PC-9 (cell line): ENCODE measurements at regions of chr9 and their contacts with region 1.

Region 1: DNA sequence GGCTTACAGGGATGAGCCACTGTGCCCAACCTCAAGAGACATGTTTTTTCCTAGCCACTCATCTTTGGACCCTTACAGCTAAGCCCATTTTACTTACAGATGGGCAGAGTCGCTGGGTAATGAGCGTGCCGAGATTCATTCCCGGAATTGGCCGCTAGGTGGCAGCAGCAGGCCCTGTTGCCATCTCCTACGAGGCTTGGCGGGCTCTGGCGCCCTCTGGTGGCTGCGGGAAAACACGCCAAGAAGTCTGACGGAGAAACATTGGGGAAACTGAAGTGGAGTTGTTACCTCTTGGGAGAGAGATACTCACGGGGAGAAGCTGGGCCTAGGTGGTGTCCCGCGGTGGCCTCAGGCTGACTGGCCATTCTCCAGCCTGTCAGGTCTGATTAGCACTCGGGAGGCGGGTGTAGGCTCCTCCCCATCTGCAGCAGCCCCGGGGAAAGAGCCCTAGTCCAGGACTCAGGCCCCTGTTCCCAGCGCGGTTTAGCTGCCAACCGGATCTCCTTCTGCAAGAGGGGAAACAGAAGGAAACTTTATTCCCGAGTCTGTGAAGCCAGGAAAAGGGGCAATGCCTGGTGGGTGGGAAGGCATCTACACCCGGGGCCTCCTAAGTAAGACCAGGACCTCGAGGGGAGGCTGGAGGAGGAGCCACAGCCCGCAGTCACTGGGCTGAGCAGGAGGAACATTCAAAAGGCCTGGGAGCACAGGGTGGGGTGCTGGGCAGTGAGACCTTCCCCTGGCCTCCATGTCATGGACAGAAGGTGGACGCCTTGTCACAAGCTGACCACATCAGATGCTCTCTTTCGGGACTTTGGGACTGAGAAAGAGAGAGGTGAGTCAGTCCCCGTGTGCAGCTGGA is 9.7 kb downstream of the PTGES2 start:
- DNase-seq: peak; percentile 75 to 93
- H3K4me3 ChIP-seq: no peak overlapping the region
- H3K27ac ChIP-seq: no peak overlapping the region
- H3K4me1 ChIP-seq: no peaks in the 10 kb centered on the region
- H3K27me3 ChIP-seq: no peaks in the 10 kb centered on the region
- CTCF ChIP-seq: peak; percentile 100

Region 2: GRCh38 chr9:127943731-127944144 is 174.1 kb before region 1 on chr9:
- CTCF ChIA-PET with region 1: interaction called, 7 read pairs
- POLR2A ChIA-PET with region 1: no interaction called
- intact Hi-C with region 1: loop called (anchors 1 kb)
- DNase-seq: peak; percentile 61 to 80
- H3K4me3 ChIP-seq: no peak overlapping the region
- H3K27ac ChIP-seq: no peak overlapping the region
- H3K4me1 ChIP-seq: no peaks in the 10 kb centered on the region
- H3K27me3 ChIP-seq: no peaks in the 10 kb centered on the region
- CTCF ChIP-seq: peak; percentile 88

Region 3: GRCh38 chr9:128053560-128053959 is 64.3 kb before region 1 on chr9:
- CTCF ChIA-PET with region 1: interaction called, 4 read pairs
- POLR2A ChIA-PET with region 1: no interaction called
- intact Hi-C with region 1: loop called (anchors 5 kb)
- DNase-seq: no peak
- H3K4me3 ChIP-seq: no peak overlapping the region
- H3K27ac ChIP-seq: no peak overlapping the region
- H3K4me1 ChIP-seq: peaks cover 32% of the 10 kb centered on the region
- H3K27me3 ChIP-seq: no peaks in the 10 kb centered on the region
- CTCF ChIP-seq: no peak

Region 4: DNA sequence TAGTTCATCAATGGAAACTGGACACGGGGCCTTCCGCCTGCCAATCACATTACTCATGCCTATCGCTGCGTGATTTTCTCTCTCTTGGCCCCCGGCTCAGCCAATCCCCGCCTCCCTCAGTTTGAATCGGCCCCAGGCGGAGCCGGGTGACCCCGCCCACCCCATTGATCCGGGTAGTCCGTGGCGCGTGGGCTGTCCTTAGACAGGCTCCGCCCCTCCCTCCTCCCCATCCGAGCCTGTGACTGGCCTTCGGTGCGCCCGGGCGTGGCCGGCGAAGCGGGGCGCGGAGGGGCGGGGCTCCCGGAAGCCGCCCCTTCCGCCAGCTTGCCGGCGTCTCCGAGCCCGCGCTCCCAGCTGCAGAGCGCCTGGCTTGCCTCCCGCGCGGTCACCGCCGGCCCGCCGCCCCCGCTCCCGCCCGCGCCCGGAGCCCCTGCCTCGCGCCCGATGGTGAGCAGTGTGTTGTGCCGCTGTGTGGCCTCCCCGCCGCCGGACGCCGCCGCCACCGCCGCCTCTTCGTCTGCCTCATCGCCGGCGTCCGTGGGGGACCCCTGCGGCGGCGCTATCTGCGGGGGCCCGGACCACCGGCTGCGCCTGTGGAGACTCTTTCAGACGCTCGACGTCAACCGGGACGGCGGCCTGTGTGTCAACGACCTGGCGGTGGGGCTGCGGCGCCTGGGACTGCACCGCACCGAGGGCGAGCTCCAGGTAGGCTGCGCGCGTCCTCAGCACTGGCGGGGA is 49.8 kb before region 1 on chr9 and contains the start of gene SLC25A25:
- CTCF ChIA-PET with region 1: interaction called, 4 read pairs
- POLR2A ChIA-PET with region 1: interaction called, 3 read pairs
- intact Hi-C with region 1: loop called (anchors 1 kb)
- DNase-seq: peak; percentile 96 to 100
- H3K4me3 ChIP-seq: peak within 1 kb of the TSS; percentile 87
- H3K27ac ChIP-seq: peak within 1 kb of the TSS; percentile 94
- H3K4me1 ChIP-seq: peaks cover 42% of the 10 kb centered on the region
- H3K27me3 ChIP-seq: no peaks in the 10 kb centered on the region
- CTCF ChIP-seq: no peak
- total RNA-seq, gene SLC25A25: 11.7 and 13.4 TPM in 2 replicates

Region 5: DNA sequence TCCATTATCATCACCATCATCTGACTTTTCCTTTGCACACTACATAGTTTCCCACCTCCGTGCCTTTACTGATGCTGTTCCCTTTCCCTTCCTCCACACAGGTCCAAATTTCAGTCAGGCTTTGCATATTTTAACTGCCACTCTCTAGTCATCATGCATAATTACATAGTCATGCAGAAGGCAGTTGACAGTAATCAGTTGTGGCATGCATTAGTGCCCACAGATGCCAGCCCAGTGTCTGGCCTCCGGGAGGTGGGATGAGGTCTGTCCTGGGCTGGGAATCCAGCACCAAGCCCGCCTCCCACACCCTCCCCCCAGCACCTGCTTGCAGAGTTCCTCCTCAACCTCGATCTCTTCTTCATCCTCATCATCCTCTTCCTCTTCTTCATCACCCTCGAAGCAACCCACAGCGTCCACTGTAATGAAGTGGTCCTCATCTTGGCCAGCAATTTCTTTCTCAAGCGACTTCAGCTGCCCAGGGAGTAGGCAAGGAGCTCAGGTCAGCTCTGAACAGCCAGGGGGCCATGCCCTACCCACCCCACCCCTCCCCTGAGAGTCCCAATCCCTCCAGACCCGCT is 51.0 kb after region 1 on chr9:
- CTCF ChIA-PET with region 1: interaction called, 10 read pairs
- POLR2A ChIA-PET with region 1: no interaction called
- intact Hi-C with region 1: no loop called
- DNase-seq: no peak
- H3K4me3 ChIP-seq: no peak overlapping the region
- H3K27ac ChIP-seq: no peak overlapping the region
- H3K4me1 ChIP-seq: no peaks in the 10 kb centered on the region
- H3K27me3 ChIP-seq: no peaks in the 10 kb centered on the region
- CTCF ChIP-seq: no peak